CD4-positive, alpha-beta T cell (primary cell): ENCODE measurements at regions of chr10 and their contacts with region 1.

Region 1: GRCh38 chr10:59906417-59907202 is at the start of gene CCDC6:
- DNase-seq: peak; percentile 85 to 96 (median 92)
- ATAC-seq: peak; percentile 89
- H3K4me3 ChIP-seq: peak within 1 kb of the TSS; percentile 86
- H3K4me3 Mint-ChIP-seq: peak within 1 kb of the TSS; percentile 91
- H3K27ac ChIP-seq: peak within 1 kb of the TSS; percentile 68 to 83
- H3K27ac Mint-ChIP-seq: peak within 1 kb of the TSS; percentile 89
- H3K4me1 ChIP-seq: peaks cover 39% of the 10 kb centered on the region
- H3K4me1 Mint-ChIP-seq: peaks cover 62% of the 10 kb centered on the region
- H3K27me3 ChIP-seq: no peaks in the 10 kb centered on the region
- H3K27me3 Mint-ChIP-seq: no peaks in the 10 kb centered on the region
- CTCF ChIP-seq: peak; percentile 83
- total RNA-seq, gene CCDC6: 21.6 to 22.1 TPM

Region 2: GRCh38 chr10:59830601-59831259 is 75.9 kb before region 1 on chr10:
- CTCF ChIA-PET with region 1: interaction called, 8 read pairs
- POLR2A ChIA-PET with region 1: no interaction called
- intact Hi-C with region 1: loop called in 1 of 2 experiments (anchors 1 kb)
- DNase-seq: peak in 4 of 14 experiments; percentile 14 to 45 (median 32)
- ATAC-seq: no peak
- H3K4me3 ChIP-seq: no peak overlapping the region
- H3K4me3 Mint-ChIP-seq: no peak overlapping the region
- H3K27ac ChIP-seq: no peak overlapping the region
- H3K27ac Mint-ChIP-seq: no peak overlapping the region
- H3K4me1 ChIP-seq: peaks cover 2% of the 10 kb centered on the region
- H3K4me1 Mint-ChIP-seq: peaks cover 51% of the 10 kb centered on the region
- H3K27me3 ChIP-seq: no peaks in the 10 kb centered on the region
- H3K27me3 Mint-ChIP-seq: no peaks in the 10 kb centered on the region
- CTCF ChIP-seq: peak; percentile 33

Region 3: DNA sequence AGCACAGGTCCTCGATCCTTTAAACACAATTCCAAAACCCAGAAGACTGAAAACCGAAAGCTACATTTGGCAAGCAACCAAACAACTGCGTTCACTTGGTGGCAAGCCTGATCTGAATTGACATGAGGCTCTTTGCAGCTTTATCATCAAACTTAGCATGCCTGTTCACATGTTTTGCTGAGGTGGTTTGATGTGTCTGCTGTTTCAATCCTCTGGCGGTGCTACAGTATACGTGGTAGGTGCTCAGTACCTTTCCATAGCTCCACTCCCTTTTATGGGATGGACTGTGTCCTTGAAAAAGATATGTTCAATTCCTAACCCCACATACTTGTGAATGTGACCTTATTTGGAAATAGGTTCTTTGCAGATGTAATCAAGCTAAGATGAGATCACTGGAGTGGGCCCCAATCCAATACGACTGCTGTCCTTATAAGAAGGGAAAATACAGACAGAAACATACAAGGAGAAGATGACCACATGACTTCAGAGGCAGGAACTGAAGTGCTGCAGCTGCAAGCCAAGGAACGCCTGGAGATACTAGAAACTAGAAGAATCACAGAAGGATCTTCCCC is 33.6 kb before region 1 on chr10:
- CTCF ChIA-PET with region 1: interaction called, 10 read pairs
- POLR2A ChIA-PET with region 1: interaction called, 30 read pairs
- intact Hi-C with region 1: loop called in 1 of 2 experiments (anchors 5 kb)
- DNase-seq: peak in 2 of 14 experiments; percentile 18 to 34
- ATAC-seq: peak; percentile 51
- H3K4me3 ChIP-seq: peak overlapping the region; percentile 17
- H3K4me3 Mint-ChIP-seq: peak overlapping the region; percentile 76
- H3K27ac ChIP-seq: no peak overlapping the region
- H3K27ac Mint-ChIP-seq: peak overlapping the region; percentile 79
- H3K4me1 ChIP-seq: peaks cover 11% of the 10 kb centered on the region
- H3K4me1 Mint-ChIP-seq: peaks cover 80% of the 10 kb centered on the region
- H3K27me3 ChIP-seq: no peaks in the 10 kb centered on the region
- H3K27me3 Mint-ChIP-seq: no peaks in the 10 kb centered on the region
- CTCF ChIP-seq: no peak

Region 4: DNA sequence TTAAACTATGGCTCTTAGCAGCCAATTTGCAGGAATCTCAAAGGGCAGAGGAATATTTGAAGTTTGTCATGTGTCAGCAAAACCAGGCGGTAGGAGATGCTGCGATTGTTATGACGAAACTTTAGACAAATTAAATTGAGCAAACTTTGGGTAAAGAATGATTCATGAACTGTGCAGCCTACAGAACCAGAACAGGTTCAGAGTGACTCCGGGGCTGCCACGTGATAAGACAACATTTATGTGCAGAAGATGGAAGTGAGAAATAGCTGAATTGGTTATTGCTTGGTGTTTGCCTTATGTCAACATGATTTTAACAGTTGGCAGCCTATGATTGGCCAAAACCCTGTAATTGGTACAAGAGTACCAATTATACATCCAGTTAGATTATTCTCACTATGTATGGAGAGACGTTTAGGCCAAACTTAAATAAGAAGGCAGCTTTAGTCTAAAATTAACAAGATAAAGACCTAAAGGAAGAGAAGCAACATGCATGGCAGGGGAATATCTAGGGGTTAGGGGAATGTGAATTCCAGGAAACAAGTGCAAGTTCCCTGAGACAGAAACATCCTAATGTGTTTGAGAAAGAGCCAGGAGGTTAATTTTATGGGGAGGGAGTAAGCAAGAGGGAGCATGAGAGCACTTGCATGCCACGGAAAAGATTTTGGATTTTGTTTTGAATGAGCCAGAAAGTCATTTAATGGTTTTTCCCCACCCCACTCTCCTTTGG is 39.2 kb after region 1 on chr10:
- CTCF ChIA-PET with region 1: no interaction called
- POLR2A ChIA-PET with region 1: no interaction called
- intact Hi-C with region 1: no loop called
- DNase-seq: no peak
- ATAC-seq: no peak
- H3K4me3 ChIP-seq: no peak overlapping the region
- H3K4me3 Mint-ChIP-seq: no peak overlapping the region
- H3K27ac ChIP-seq: no peak overlapping the region
- H3K27ac Mint-ChIP-seq: no peak overlapping the region
- H3K4me1 ChIP-seq: no peaks in the 10 kb centered on the region
- H3K4me1 Mint-ChIP-seq: no peaks in the 10 kb centered on the region
- H3K27me3 ChIP-seq: peaks cover 0 to 6% of the 10 kb centered on the region in 2 experiments
- H3K27me3 Mint-ChIP-seq: peaks cover 5% of the 10 kb centered on the region
- CTCF ChIP-seq: no peak

Region 5: DNA sequence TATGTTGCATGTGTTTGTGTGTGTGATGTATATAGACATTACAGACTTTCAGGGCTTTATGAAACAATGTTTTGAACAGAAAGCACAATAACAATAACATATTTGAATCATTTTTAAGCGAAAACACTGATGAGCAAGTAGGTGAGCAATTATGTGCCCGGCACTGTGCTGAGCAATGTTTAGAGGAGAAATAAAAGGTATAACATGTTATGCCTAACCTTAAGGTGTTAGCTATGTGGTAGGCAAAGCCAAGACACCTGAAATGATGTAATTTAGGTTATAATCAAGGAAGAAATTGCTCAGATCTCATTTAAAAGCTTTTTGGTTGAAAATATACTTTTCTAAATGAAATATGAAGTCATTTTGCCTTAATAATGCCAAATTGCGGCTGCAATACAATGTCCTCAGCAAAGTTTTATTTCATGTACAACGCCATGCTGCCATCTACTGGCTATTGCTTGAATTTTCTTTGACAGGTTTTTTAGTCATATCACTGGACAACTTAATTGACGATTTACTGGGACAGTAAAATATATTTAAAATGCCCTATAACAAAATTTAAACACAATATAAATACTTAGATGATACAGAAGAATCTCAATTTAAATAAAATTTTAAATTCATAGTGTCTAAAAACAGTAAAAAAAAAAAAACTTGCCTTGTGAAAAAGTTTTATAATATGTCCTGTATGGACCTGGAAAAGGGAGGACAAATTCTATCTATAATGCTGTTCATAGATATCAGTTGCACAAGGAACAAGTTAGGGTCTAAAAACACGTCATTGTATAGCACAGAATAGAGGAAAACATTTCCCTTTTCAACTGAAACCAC is 740.6 kb after region 1 on chr10:
- CTCF ChIA-PET with region 1: no interaction called
- POLR2A ChIA-PET with region 1: interaction called, 3 read pairs
- intact Hi-C with region 1: loop called in 1 of 2 experiments (anchors 10 kb)
- DNase-seq: peak in 9 of 14 experiments; percentile 8 to 78 (median 33)
- ATAC-seq: peak; percentile 40
- H3K4me3 ChIP-seq: no peak overlapping the region
- H3K4me3 Mint-ChIP-seq: no peak overlapping the region
- H3K27ac ChIP-seq: no peak overlapping the region
- H3K27ac Mint-ChIP-seq: peak overlapping the region; percentile 5
- H3K4me1 ChIP-seq: peaks cover 6% of the 10 kb centered on the region
- H3K4me1 Mint-ChIP-seq: peaks cover 66% of the 10 kb centered on the region
- H3K27me3 ChIP-seq: no peaks in the 10 kb centered on the region
- H3K27me3 Mint-ChIP-seq: no peaks in the 10 kb centered on the region
- CTCF ChIP-seq: peak; percentile 91